ENCODE measurements at regions of chr4 and their contacts with region 1.

Region 1: GRCh38 chr4:143575331-143575730 is 61.8 kb downstream of the SMARCA5 start:
- DNase-seq: no peak
- H3K4me3 ChIP-seq: no peak overlapping the region
- H3K27ac ChIP-seq: no peak overlapping the region
- H3K4me1 ChIP-seq: no peaks in the 10 kb centered on the region
- H3K27me3 ChIP-seq: no peaks in the 10 kb centered on the region

Region 2: GRCh38 chr4:143558823-143559756 is 16.2 kb before region 1 on chr4:
- CTCF ChIA-PET with region 1: interaction called, 13 read pairs
- POLR2A ChIA-PET with region 1: no interaction called
- DNase-seq: peak; percentile 82 to 93 (median 90)
- H3K4me3 ChIP-seq: peak overlapping the region; percentile 37 to 92 (median 79)
- H3K27ac ChIP-seq: peak overlapping the region; percentile 48 to 70
- H3K4me1 ChIP-seq: peaks cover 0 to 14% (median 4%) of the 10 kb centered on the region in 4 experiments
- H3K27me3 ChIP-seq: no peaks in the 10 kb centered on the region